CD4-positive, alpha-beta T cell (primary cell): ENCODE measurements at regions of chr3 and their contacts with region 1.

Region 1: GRCh38 chr3:41198950-41199865 is at the start of gene CTNNB1:
- DNase-seq: peak; percentile 86 to 97 (median 91)
- ATAC-seq: peak; percentile 81
- H3K4me3 ChIP-seq: peak within 1 kb of the TSS; percentile 90
- H3K4me3 Mint-ChIP-seq: peak within 1 kb of the TSS; percentile 98
- H3K27ac ChIP-seq: peak within 1 kb of the TSS; percentile 90
- H3K27ac Mint-ChIP-seq: peak within 1 kb of the TSS; percentile 94
- H3K4me1 ChIP-seq: peaks cover 16% of the 10 kb centered on the region
- H3K4me1 Mint-ChIP-seq: peaks cover 45% of the 10 kb centered on the region
- H3K27me3 ChIP-seq: no peaks in the 10 kb centered on the region
- H3K27me3 Mint-ChIP-seq: no peaks in the 10 kb centered on the region
- CTCF ChIP-seq: no peak
- total RNA-seq, gene CTNNB1: 226 to 228 TPM

Region 2: GRCh38 chr3:40309418-40309924 is 889.7 kb before region 1 on chr3 and contains the start of gene EIF1B:
- CTCF ChIA-PET with region 1: no interaction called
- POLR2A ChIA-PET with region 1: interaction called, 14 read pairs
- intact Hi-C with region 1: loop called in 1 of 2 experiments (anchors 5 kb)
- DNase-seq: peak; percentile 96 to 99 (median 98)
- ATAC-seq: peak; percentile 89
- H3K4me3 ChIP-seq: peak within 1 kb of the TSS; percentile 93
- H3K4me3 Mint-ChIP-seq: peak within 1 kb of the TSS; percentile 100
- H3K27ac ChIP-seq: peak within 1 kb of the TSS; percentile 91 to 95
- H3K27ac Mint-ChIP-seq: peak within 1 kb of the TSS; percentile 100
- H3K4me1 ChIP-seq: peaks cover 11% of the 10 kb centered on the region
- H3K4me1 Mint-ChIP-seq: peaks cover 50% of the 10 kb centered on the region
- H3K27me3 ChIP-seq: no peaks in the 10 kb centered on the region
- H3K27me3 Mint-ChIP-seq: no peaks in the 10 kb centered on the region
- CTCF ChIP-seq: peak; percentile 90
- total RNA-seq, gene EIF1B: 112 to 120 TPM

Region 3: GRCh38 chr3:41073190-41073589 is 126.0 kb before region 1 on chr3:
- CTCF ChIA-PET with region 1: no interaction called
- POLR2A ChIA-PET with region 1: no interaction called
- intact Hi-C with region 1: no loop called
- DNase-seq: no peak
- ATAC-seq: no peak
- H3K4me3 ChIP-seq: no peak overlapping the region
- H3K4me3 Mint-ChIP-seq: no peak overlapping the region
- H3K27ac ChIP-seq: no peak overlapping the region
- H3K27ac Mint-ChIP-seq: no peak overlapping the region
- H3K4me1 ChIP-seq: no peaks in the 10 kb centered on the region
- H3K4me1 Mint-ChIP-seq: no peaks in the 10 kb centered on the region
- H3K27me3 ChIP-seq: no peaks in the 10 kb centered on the region
- H3K27me3 Mint-ChIP-seq: peaks cover 6% of the 10 kb centered on the region
- CTCF ChIP-seq: no peak

Region 4: GRCh38 chr3:41117398-41117870 is 81.8 kb before region 1 on chr3:
- CTCF ChIA-PET with region 1: no interaction called
- POLR2A ChIA-PET with region 1: interaction called, 39 read pairs
- intact Hi-C with region 1: loop called (anchors 1 to 5 kb)
- DNase-seq: peak; percentile 64 to 95 (median 84)
- ATAC-seq: peak; percentile 90
- H3K4me3 ChIP-seq: peak overlapping the region; percentile 41
- H3K4me3 Mint-ChIP-seq: peak overlapping the region; percentile 71
- H3K27ac ChIP-seq: peak overlapping the region; percentile 26 to 68
- H3K27ac Mint-ChIP-seq: peak overlapping the region; percentile 93
- H3K4me1 ChIP-seq: peaks cover 35% of the 10 kb centered on the region
- H3K4me1 Mint-ChIP-seq: peaks cover 42% of the 10 kb centered on the region
- H3K27me3 ChIP-seq: no peaks in the 10 kb centered on the region
- H3K27me3 Mint-ChIP-seq: no peaks in the 10 kb centered on the region
- CTCF ChIP-seq: no peak

Region 5: GRCh38 chr3:41224120-41224806 is 25.1 kb after region 1 on chr3:
- CTCF ChIA-PET with region 1: interaction called, 4 read pairs
- POLR2A ChIA-PET with region 1: interaction called, 16 read pairs
- intact Hi-C with region 1: no loop called
- DNase-seq: no peak
- ATAC-seq: no peak
- H3K4me3 ChIP-seq: no peak overlapping the region
- H3K4me3 Mint-ChIP-seq: no peak overlapping the region
- H3K27ac ChIP-seq: no peak overlapping the region
- H3K27ac Mint-ChIP-seq: no peak overlapping the region
- H3K4me1 ChIP-seq: peaks cover 16% of the 10 kb centered on the region
- H3K4me1 Mint-ChIP-seq: peaks cover 75% of the 10 kb centered on the region
- H3K27me3 ChIP-seq: no peaks in the 10 kb centered on the region
- H3K27me3 Mint-ChIP-seq: no peaks in the 10 kb centered on the region
- CTCF ChIP-seq: no peak

Region 6: GRCh38 chr3:41961750-41962679 is 762.8 kb after region 1 on chr3 and contains the start of gene ULK4:
- CTCF ChIA-PET with region 1: no interaction called
- POLR2A ChIA-PET with region 1: no interaction called
- intact Hi-C with region 1: loop called in 1 of 2 experiments (anchors 5 kb)
- DNase-seq: peak; percentile 87 to 99 (median 92)
- ATAC-seq: peak; percentile 83
- H3K4me3 ChIP-seq: peak within 1 kb of the TSS; percentile 100
- H3K4me3 Mint-ChIP-seq: peak within 1 kb of the TSS; percentile 100
- H3K27ac ChIP-seq: peak within 1 kb of the TSS; percentile 86 to 97
- H3K27ac Mint-ChIP-seq: peak within 1 kb of the TSS; percentile 98
- H3K4me1 ChIP-seq: peaks cover 19% of the 10 kb centered on the region
- H3K4me1 Mint-ChIP-seq: peaks cover 26% of the 10 kb centered on the region
- H3K27me3 ChIP-seq: no peaks in the 10 kb centered on the region
- H3K27me3 Mint-ChIP-seq: no peaks in the 10 kb centered on the region
- CTCF ChIP-seq: no peak
- total RNA-seq, gene ULK4: 23.8 to 28.6 TPM